Breast epithelium (tissue), 4 donors: ENCODE measurements at regions of chr9 and their contacts with region 1.

Region 1: DNA sequence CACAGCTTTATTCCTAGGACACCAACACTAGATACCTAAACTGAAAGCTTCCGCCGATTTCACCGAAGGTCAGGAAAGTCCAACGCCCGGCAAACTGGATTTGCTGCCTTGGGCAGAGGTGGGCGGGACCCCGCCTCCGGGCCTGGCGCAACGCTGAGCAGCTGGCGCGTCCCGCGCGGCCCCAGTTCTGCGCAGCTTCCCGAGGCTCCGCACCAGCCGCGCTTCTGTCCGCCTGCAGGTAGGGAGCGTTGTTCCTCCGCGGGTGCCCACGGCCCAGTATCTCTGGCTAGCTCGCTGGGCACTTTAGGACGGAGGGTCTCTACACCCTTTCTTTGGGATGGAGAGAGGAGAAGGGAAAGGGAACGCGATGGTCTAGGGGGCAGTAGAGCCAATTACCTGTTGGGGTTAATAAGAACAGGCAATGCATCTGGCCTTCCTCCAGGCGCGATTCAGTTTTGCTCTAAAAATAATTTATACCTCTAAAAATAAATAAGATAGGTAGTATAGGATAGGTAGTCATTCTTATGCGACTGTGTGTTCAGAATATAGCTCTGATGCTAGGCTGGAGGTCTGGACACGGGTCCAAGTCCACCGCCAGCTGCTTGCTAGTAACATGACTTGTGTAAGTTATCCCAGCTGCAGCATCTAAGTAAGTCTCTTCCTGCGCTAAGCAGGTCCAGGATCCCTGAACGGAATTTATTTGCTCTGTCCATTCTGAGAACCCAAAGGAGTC is at the start of gene CD274:
- DNase-seq: peak; percentile 76 to 82
- H3K4me3 ChIP-seq: peak within 1 kb of the TSS; percentile 49 to 73 (median 57)
- H3K27ac ChIP-seq: peak within 1 kb of the TSS; percentile 90 to 93
- H3K4me1 ChIP-seq: no peaks in the 10 kb centered on the region
- H3K27me3 ChIP-seq: no peaks in the 10 kb centered on the region
- CTCF ChIP-seq: peak; percentile 39 to 71 (median 69)
- POLR2A ChIP-seq: no peak
- total RNA-seq, gene CD274: 1.6 to 3.1 (median 2.9) TPM

Region 2: GRCh38 chr9:5095795-5096194 is 354.7 kb before region 1 on chr9:
- intact Hi-C with region 1: no loop called
- DNase-seq: no peak
- H3K4me3 ChIP-seq: no peak overlapping the region
- H3K27ac ChIP-seq: no peak overlapping the region
- H3K4me1 ChIP-seq: no peaks in the 10 kb centered on the region
- H3K27me3 ChIP-seq: no peaks in the 10 kb centered on the region
- CTCF ChIP-seq: no peak
- POLR2A ChIP-seq: no peak

Region 3: GRCh38 chr9:5557606-5558587 is 107.4 kb after region 1 on chr9:
- intact Hi-C with region 1: loop called (anchors 5 kb)
- DNase-seq: no peak
- H3K4me3 ChIP-seq: no peak overlapping the region
- H3K27ac ChIP-seq: peak overlapping the region; percentile 36 to 64
- H3K4me1 ChIP-seq: no peaks in the 10 kb centered on the region
- H3K27me3 ChIP-seq: no peaks in the 10 kb centered on the region
- CTCF ChIP-seq: no peak
- POLR2A ChIP-seq: no peak